ENCODE measurements at regions of chr10 and their contacts with region 1.

Region 1: GRCh38 chr10:38072552-38072951 is 21.6 kb upstream of the ZNF37A start:
- DNase-seq: no peak

Region 2: DNA sequence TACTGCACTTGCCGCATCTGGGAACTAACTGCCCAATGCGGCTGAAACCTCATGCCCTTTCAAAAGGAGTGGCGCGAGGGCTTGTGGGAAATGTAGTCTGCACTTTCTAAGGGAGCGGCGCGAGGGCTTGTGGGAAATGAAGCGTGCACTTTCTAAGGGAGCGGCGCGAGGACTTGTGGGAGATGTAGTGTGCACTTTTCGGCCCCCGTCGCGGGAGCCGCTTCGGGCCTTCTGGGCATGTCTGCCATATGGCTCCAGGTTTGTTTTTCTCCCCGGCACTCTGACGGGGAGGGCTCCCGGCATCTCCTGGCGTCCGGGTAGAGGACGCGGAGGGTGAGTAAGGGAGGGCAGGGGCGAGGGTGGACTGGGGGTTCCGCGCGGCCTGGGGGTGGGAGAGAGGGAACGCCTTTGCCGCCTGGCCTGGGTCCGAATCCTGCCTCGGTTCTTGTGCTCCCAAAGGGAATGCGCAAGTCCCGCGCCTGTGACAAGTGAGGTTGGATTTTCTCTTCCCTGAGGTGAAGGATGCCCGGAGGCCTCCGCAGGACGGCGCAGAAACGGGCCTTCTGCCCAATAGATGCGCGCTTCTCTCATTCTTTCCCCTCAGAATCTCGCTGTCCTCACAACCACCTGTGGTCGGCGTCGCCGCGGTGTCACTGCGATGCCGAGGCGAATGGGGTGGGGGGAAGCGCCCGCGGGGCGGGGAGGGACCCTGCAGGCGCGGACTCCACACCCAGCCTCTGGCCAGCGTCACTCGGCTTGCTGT is 21.8 kb after region 1 on chr10 and contains the start of gene ZNF37A:
- intact Hi-C with region 1: loop called in 1 of 2 experiments (anchors 2 kb)
- DNase-seq: peak; percentile 97
- total RNA-seq, gene ZNF37A: 15.9 to 19.5 TPM